GM12878 (cell line): ENCODE measurements at regions of chr4 and their contacts with region 1.

Region 1: DNA sequence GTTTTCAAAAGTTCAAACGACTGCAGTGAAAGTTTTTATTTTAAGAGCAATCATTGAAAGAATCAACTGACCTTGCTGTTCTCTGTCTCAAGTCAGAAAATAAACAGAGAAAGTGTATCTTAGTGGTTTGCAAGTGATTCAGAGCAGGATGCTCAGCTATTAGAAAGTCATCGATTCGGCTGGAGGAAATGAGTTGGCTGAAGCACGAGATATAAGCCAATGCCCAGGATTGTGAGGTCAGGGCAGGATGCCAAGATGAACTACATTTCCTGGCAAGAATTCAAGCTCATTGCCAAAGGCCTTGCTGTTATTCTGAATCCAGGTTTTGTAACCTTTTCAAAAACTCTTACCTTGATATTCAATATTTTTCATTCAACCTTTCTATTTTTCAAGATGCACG is 541.4 kb upstream of the BOD1L1 start:
- DNase-seq: peak; percentile 53
- ATAC-seq: peak; percentile 67
- H3K4me3 ChIP-seq: no peak overlapping the region
- H3K27ac ChIP-seq: no peak overlapping the region
- H3K4me1 ChIP-seq: peaks cover 10% of the 10 kb centered on the region
- H3K27me3 ChIP-seq: no peaks in the 10 kb centered on the region
- CTCF ChIP-seq: no peak
- EP300 ChIP-seq: peak in 1 of 2 experiments; percentile 11; a peak in 1 of 4 replicates
- POLR2A ChIP-seq: no peak
- RAD21 ChIP-seq: no peak

Region 2: DNA sequence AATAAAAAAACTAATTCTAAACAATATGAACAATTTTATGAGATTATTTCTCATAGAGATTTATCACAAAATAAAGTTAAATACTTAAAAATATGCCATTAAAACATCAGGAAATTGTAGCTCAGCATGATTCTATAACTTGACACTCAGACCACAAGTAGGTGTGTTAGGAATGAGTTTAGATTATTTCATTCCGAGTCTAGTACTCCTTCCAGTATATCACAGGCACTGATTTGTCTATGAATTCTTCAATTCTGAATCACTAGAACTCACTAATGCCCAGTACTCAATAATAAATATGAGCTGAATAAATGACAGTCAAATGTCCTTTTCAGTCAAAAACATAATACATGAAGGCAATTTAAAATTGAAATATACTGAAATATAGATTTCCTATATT is 563.6 kb before region 1 on chr4:
- CTCF ChIA-PET with region 1: no interaction called
- POLR2A ChIA-PET with region 1: no interaction called
- RAD21 ChIA-PET with region 1: no interaction called
- SMC1A ChIA-PET with region 1: no interaction called
- in situ Hi-C with region 1: no loop called
- intact Hi-C with region 1: no loop called
- DNase-seq: no peak
- ATAC-seq: no peak
- H3K4me3 ChIP-seq: no peak overlapping the region
- H3K27ac ChIP-seq: no peak overlapping the region
- H3K4me1 ChIP-seq: peaks cover 18% of the 10 kb centered on the region
- H3K27me3 ChIP-seq: no peaks in the 10 kb centered on the region
- CTCF ChIP-seq: no peak
- EP300 ChIP-seq: no peak
- POLR2A ChIP-seq: no peak
- RAD21 ChIP-seq: no peak

Region 3: GRCh38 chr4:13627606-13628301 is 541.2 kb before region 1 on chr4 and contains the start of gene BOD1L1:
- CTCF ChIA-PET with region 1: no interaction called
- POLR2A ChIA-PET with region 1: no interaction called
- RAD21 ChIA-PET with region 1: no interaction called
- SMC1A ChIA-PET with region 1: no interaction called
- in situ Hi-C with region 1: no loop called
- intact Hi-C with region 1: loop called (anchors 10 kb)
- DNase-seq: peak; percentile 60
- ATAC-seq: peak; percentile 88
- H3K4me3 ChIP-seq: peak within 1 kb of the TSS; percentile 92
- H3K27ac ChIP-seq: peak within 1 kb of the TSS; percentile 90
- H3K4me1 ChIP-seq: no peaks in the 10 kb centered on the region
- H3K27me3 ChIP-seq: no peaks in the 10 kb centered on the region
- CTCF ChIP-seq: peak; percentile 57 to 62 (median 58)
- EP300 ChIP-seq: peak in 1 of 2 experiments; percentile 49; a peak in 2 of 4 replicates
- POLR2A ChIP-seq: peak; percentile 95
- RAD21 ChIP-seq: 0 out of 2 replicates have a peak, but pooled peaks have one; percentile 29
- polyA plus RNA-seq, gene BOD1L1: 6.8 to 12.1 TPM

Region 4: GRCh38 chr4:14111730-14112181 is 57.2 kb before region 1 on chr4:
- CTCF ChIA-PET with region 1: no interaction called
- POLR2A ChIA-PET with region 1: no interaction called
- RAD21 ChIA-PET with region 1: no interaction called
- SMC1A ChIA-PET with region 1: no interaction called
- in situ Hi-C with region 1: no loop called
- intact Hi-C with region 1: no loop called
- DNase-seq: no peak
- ATAC-seq: no peak
- H3K4me3 ChIP-seq: no peak overlapping the region
- H3K27ac ChIP-seq: no peak overlapping the region
- H3K4me1 ChIP-seq: no peaks in the 10 kb centered on the region
- H3K27me3 ChIP-seq: no peaks in the 10 kb centered on the region
- CTCF ChIP-seq: no peak
- EP300 ChIP-seq: no peak
- POLR2A ChIP-seq: no peak
- RAD21 ChIP-seq: no peak

Region 5: DNA sequence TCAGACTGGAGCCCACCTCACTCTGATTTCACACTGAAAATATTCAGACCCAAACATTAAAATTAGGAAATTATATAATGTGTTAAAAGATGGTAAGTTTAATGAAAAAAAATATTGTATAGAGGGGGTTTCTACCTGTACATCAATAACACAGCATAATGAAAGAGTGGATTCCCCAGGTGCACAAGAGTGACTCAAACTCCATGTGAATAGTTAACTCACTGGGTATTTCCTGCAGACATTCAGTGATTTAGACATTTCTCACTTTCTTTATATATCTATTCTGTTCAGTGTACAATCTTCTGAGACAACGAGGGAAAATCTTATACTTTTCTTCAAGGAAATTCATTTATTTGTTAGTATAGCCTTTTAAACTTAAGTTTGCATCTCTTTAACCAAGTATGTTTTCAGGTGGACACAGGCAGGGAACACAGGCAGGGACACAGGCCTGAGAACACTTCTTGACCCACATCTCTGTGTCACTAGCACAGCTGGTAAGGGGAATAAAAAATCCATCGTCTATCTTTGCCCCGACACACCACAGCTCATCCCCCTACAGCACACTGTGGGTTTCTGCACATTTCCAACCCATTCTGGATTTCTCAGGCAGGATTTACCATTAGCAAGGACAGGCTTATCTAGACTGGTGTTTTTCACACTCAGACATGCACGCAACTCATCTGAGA is 15.9 kb before region 1 on chr4:
- CTCF ChIA-PET with region 1: interaction called, 7 read pairs
- POLR2A ChIA-PET with region 1: interaction called, 20 read pairs
- RAD21 ChIA-PET with region 1: interaction called, 81 read pairs
- SMC1A ChIA-PET with region 1: interaction called, 28 read pairs
- in situ Hi-C with region 1: no loop called
- intact Hi-C with region 1: no loop called
- DNase-seq: no peak
- ATAC-seq: peak; percentile 84
- H3K4me3 ChIP-seq: no peak overlapping the region
- H3K27ac ChIP-seq: no peak overlapping the region; the same call in 1 of the 2 replicates
- H3K4me1 ChIP-seq: peaks cover 24% of the 10 kb centered on the region
- H3K27me3 ChIP-seq: no peaks in the 10 kb centered on the region
- CTCF ChIP-seq: no peak
- EP300 ChIP-seq: peak; percentile 18 to 58; a peak in 1 of 4 replicates
- POLR2A ChIP-seq: no peak
- RAD21 ChIP-seq: no peak

Region 6: DNA sequence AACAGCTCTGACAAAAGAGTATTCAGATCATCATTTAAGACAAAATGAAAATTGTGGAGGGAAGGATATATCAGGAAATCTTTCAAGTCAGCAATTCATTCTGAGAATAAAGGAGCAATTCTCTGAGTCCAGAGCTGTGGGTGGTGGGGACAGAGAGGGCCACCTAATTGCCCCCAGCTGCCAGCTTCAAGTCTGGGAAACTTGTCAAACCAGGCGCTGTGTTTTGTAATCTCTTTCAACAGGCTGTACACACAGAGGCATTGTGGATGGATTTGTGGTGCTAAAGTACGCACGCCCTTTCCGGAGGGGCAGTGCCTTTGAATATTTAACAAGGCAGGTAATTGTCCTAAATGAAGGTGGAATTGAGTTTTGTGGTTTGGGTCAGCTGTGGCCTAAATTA is 49.7 kb after region 1 on chr4:
- CTCF ChIA-PET with region 1: no interaction called
- POLR2A ChIA-PET with region 1: no interaction called
- RAD21 ChIA-PET with region 1: no interaction called
- SMC1A ChIA-PET with region 1: no interaction called
- in situ Hi-C with region 1: no loop called
- intact Hi-C with region 1: no loop called
- DNase-seq: no peak
- ATAC-seq: no peak
- H3K4me3 ChIP-seq: no peak overlapping the region
- H3K27ac ChIP-seq: no peak overlapping the region
- H3K4me1 ChIP-seq: no peaks in the 10 kb centered on the region
- H3K27me3 ChIP-seq: no peaks in the 10 kb centered on the region
- CTCF ChIP-seq: no peak
- EP300 ChIP-seq: no peak
- POLR2A ChIP-seq: no peak
- RAD21 ChIP-seq: no peak

Region 7: GRCh38 chr4:14375816-14376215 is 206.9 kb after region 1 on chr4:
- CTCF ChIA-PET with region 1: no interaction called
- POLR2A ChIA-PET with region 1: no interaction called
- RAD21 ChIA-PET with region 1: no interaction called
- SMC1A ChIA-PET with region 1: no interaction called
- in situ Hi-C with region 1: no loop called
- intact Hi-C with region 1: no loop called
- DNase-seq: no peak
- ATAC-seq: no peak
- H3K4me3 ChIP-seq: no peak overlapping the region
- H3K27ac ChIP-seq: no peak overlapping the region
- H3K4me1 ChIP-seq: no peaks in the 10 kb centered on the region
- H3K27me3 ChIP-seq: no peaks in the 10 kb centered on the region
- CTCF ChIP-seq: no peak
- EP300 ChIP-seq: no peak
- POLR2A ChIP-seq: no peak
- RAD21 ChIP-seq: no peak

Region 8: DNA sequence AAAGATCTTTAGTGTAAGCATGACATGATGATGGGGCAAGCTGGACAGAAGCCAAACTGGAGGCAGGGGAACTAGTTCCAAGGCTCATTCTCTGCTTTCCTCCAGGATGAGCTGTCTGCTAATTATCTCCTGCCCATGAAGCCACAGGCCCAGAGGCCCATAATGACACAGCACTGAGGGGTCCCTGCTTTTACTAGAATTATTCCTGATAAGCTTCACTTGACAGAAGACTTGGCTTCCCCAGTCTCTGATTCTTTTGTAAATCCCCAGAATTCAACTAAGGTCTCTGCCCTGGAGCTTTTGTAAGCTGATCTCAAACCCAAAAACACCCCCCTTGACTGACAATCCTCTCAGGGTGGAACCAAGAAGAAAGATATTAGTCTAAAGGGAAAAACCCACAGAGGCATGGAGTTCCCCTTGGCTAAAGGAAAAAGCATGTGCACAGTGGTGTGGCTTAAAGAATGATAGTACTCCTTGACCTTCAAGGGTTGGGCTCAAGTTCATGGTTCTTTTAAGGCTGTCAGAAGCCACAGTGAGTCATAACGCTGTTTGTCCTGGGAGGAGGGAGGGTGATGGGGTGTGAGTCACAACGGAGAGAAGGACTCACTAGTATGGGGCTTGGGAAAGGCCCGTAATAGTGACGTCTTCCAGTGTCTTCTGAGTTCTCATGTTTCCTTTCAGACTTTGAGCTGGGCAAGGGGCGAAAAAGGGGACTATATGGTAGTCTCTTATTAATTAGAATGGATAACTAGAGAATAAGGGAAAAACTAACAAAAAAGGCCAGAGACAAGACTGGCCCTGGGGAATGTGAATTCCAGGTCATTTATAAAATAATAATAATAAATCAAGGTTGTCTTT is 687.4 kb after region 1 on chr4:
- CTCF ChIA-PET with region 1: no interaction called
- POLR2A ChIA-PET with region 1: no interaction called
- RAD21 ChIA-PET with region 1: no interaction called
- SMC1A ChIA-PET with region 1: interaction called, 3 read pairs
- in situ Hi-C with region 1: no loop called
- intact Hi-C with region 1: loop called (anchors 5 kb)
- DNase-seq: peak; percentile 96
- ATAC-seq: peak; percentile 96
- H3K4me3 ChIP-seq: no peak overlapping the region
- H3K27ac ChIP-seq: peak overlapping the region; percentile 51
- H3K4me1 ChIP-seq: peaks cover 20% of the 10 kb centered on the region
- H3K27me3 ChIP-seq: no peaks in the 10 kb centered on the region
- CTCF ChIP-seq: no peak
- EP300 ChIP-seq: peak; percentile 81 to 92; a peak in 3 of 4 replicates
- POLR2A ChIP-seq: no peak
- RAD21 ChIP-seq: peak; percentile 27; the same call in 1 of the 2 replicates

Region 9: DNA sequence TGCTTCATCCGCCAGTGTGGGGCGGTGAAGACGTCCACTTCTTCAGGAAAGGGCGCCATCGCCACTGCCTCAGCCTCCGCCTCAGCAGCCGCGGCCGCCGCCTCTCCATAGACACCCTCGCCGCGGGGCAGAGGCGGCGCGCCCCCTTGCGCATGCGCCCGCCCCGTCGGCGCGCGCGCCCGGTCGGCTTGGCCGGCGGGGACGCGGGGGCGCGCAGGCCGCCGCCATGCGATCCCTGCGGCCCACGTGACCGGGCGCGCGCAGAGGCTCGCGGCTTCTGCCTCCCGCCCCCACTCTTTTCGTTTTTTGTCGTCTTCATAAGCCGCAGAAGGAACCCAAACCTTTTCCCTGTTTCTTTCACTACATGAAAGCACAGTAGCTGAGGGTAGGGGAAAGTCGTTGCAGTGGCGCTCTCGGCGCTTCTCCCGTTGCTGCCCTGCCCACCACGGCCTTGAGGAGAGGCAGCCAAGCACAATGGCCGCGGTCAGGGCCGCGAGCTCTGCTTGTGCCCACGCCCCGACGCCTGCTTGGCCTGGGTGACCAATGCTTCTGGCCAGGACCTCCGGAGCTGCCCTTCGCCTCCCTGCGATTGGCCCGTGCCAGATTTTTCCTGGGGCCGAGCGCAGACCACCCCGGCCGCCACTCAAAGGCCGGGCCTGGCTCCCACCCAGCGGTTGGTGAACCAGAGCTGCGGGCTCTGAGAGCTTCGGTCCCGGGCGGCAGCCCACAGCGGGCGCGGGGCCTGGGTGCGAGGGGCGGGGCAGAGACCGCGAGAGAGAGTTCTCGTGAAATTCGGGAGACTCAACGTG is 1486.5 kb after region 1 on chr4 and contains the start of gene FBXL5:
- CTCF ChIA-PET with region 1: no interaction called
- POLR2A ChIA-PET with region 1: no interaction called
- RAD21 ChIA-PET with region 1: no interaction called
- SMC1A ChIA-PET with region 1: no interaction called
- in situ Hi-C with region 1: no loop called
- intact Hi-C with region 1: loop called (anchors 10 kb)
- DNase-seq: peak; percentile 36
- ATAC-seq: peak; percentile 64
- H3K4me3 ChIP-seq: peak within 1 kb of the TSS; percentile 84
- H3K27ac ChIP-seq: peak within 1 kb of the TSS; percentile 95
- H3K4me1 ChIP-seq: peaks cover 15% of the 10 kb centered on the region
- H3K27me3 ChIP-seq: no peaks in the 10 kb centered on the region
- CTCF ChIP-seq: no peak
- EP300 ChIP-seq: no peak
- POLR2A ChIP-seq: peak; percentile 88
- RAD21 ChIP-seq: no peak
- polyA plus RNA-seq, gene FBXL5: 10.1 to 12.3 TPM